Tibial artery (tissue), 4 donors: ENCODE measurements at regions of chr11 and their contacts with region 1.

Region 1: GRCh38 chr11:105774899-105775298 is 165.0 kb downstream of the GRIA4 start:
- DNase-seq: no peak
- H3K4me3 ChIP-seq: no peak overlapping the region
- H3K27ac ChIP-seq: no peak overlapping the region
- H3K4me1 ChIP-seq: no peaks in the 10 kb centered on the region
- H3K27me3 ChIP-seq: no peaks in the 10 kb centered on the region
- CTCF ChIP-seq: no peak

Region 2: GRCh38 chr11:105644839-105645573 is 129.9 kb before region 1 on chr11:
- intact Hi-C with region 1: loop called (anchors 5 kb)
- DNase-seq: no peak
- H3K4me3 ChIP-seq: no peak overlapping the region
- H3K27ac ChIP-seq: no peak overlapping the region
- H3K4me1 ChIP-seq: no peaks in the 10 kb centered on the region
- H3K27me3 ChIP-seq: no peaks in the 10 kb centered on the region
- CTCF ChIP-seq: no peak

Region 3: DNA sequence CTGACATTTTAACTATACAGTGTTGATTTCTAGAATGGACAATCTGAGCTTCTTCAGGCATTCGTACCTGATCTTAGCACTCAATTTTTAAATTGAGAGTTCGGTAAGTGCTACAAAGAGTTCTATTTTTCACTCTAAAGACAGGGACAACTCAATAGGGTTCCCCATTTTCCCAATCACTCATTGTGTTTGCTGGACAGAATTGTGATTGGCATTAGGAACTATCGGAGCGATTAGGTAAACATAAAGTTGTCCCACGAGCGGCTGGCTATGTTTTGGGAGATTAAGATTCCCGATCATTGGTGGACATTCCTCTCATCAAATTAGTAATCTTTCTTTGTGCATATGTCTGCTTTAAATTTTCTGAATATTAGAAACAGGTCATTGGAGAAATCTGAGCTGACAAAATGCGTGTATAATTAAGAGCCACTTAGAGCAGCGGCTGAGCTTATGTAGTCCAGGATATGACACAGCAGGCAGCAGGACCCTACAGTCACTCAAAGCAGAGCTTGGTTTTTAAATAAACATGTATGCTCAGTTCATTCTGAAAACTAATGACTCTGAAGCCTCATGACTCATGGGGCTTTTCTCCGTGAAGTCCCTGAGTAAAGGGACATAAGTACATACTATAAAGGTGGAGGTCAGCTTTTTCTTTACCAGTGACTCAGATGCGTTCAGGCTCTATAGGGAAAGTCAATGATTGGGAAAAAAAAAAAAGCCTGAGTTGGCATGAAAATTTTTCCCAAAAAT is 55.7 kb before region 1 on chr11:
- intact Hi-C with region 1: no loop called
- DNase-seq: no peak
- H3K4me3 ChIP-seq: no peak overlapping the region
- H3K27ac ChIP-seq: no peak overlapping the region
- H3K4me1 ChIP-seq: no peaks in the 10 kb centered on the region
- H3K27me3 ChIP-seq: no peaks in the 10 kb centered on the region
- CTCF ChIP-seq: no peak